ENCODE measurements at regions of chr10 and their contacts with region 1.

Region 1: GRCh38 chr10:70267161-70267933 is 16.5 kb downstream of the NPFFR1 start:
- DNase-seq: no peak
- ATAC-seq: peak in 2 of 8 donors; percentile 15 to 75
- H3K4me3 ChIP-seq: no peak overlapping the region
- H3K27ac ChIP-seq: no peak overlapping the region
- H3K4me1 ChIP-seq: peaks cover 0 to 17% (median 0%) of the 10 kb centered on the region in 9 donors
- H3K27me3 ChIP-seq: peaks cover 0 to 14% (median 0%) of the 10 kb centered on the region in 7 donors
- CTCF ChIP-seq: peak in 5 of 9 donors; percentile 18 to 35 (median 22)

Region 2: DNA sequence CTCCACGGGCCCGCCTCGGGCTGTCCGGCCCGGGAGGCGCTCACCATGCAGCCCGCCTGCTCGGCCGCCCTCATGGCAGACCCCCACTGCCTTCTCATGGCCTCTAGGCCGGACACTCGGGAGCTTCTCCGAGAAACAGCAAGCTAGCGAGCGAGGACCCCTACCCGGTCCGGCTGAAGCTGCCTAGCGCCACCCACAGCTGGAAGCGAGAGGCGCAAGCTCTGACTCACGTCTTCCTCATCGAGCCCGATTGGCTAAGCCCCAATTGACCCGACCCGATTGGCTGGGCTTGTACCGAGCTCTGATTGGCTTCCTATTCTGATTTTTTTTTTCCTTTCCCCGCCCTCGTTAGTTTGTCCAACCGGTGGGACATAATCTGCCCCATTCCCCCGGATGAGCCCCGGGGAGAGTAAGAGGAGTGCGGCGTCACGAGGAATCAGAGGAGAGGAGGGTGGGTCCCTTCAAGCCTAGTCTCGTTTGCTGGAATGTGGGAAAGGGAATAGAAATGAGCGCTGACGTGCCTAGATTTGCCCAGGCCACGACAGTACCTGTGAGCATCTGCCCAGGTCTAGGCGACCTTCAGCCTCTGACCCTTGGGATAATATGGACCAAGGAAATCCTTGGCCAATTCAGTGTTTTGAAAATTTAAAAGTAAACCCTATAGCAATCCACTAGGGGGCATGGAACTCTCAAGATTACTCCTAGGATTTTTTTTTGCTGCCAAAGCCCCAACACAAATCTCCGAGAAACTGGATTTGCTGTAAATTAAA is 120.7 kb before region 1 on chr10 and contains the start of gene TYSND1:
- intact Hi-C with region 1: no loop called
- DNase-seq: peak; percentile 94 to 98
- ATAC-seq: peak; percentile 87 to 98 (median 96)
- H3K4me3 ChIP-seq: peak within 1 kb of the TSS; percentile 74 to 90 (median 81)
- H3K27ac ChIP-seq: peak within 1 kb of the TSS; percentile 83 to 97 (median 92)
- H3K4me1 ChIP-seq: peaks cover 8 to 28% (median 20%) of the 10 kb centered on the region in 9 donors
- H3K27me3 ChIP-seq: no peaks in the 10 kb centered on the region
- CTCF ChIP-seq: peak; percentile 49 to 88 (median 70)
- total RNA-seq, gene TYSND1: 3.5 to 6.5 (median 4.6) TPM

Region 3: DNA sequence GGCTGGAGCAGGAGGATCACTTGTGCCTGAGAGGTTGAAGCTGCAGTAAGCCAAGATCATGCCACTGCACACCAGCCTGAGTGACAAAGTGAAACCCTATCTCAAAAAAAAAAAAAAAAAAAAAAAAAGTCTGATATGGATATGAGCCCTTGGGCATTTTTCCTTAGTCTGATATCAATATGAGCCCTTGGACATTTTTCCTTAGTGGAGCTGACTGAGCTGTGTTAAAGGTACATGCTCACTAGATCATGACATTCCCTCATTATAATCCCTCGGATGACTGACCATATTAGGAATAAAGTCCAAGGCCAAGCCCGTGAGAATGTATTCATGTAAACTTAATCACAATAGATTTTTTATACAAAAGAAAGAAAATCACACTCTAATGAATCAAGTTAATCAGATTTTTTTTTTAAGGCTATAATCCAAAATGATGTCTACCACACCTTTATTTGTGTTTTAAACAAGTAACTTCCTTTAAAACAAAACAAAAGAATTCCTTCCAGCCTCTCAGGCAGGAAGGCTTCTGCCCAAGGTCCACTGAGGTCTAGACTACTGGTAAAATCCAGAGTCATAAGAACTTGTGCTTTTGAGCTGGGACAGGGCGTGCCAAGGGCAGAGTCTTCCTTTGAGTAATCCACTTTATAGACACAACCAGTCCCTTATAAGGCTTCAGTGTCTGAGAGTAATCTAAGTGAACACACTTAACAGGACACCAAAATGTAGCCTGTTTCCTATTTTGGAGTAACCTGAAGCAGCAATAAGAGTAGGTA is 39.6 kb before region 1 on chr10:
- intact Hi-C with region 1: loop called in 3 of 10 experiments (anchors 5 to 10 kb)
- DNase-seq: no peak
- ATAC-seq: peak in 4 of 8 donors; percentile 29 to 56 (median 42)
- H3K4me3 ChIP-seq: no peak overlapping the region
- H3K27ac ChIP-seq: peak overlapping the region in 4 of 10 donors; percentile 10 to 37 (median 20)
- H3K4me1 ChIP-seq: peaks cover 0 to 53% (median 32%) of the 10 kb centered on the region in 9 donors
- H3K27me3 ChIP-seq: no peaks in the 10 kb centered on the region
- CTCF ChIP-seq: no peak

Region 4: DNA sequence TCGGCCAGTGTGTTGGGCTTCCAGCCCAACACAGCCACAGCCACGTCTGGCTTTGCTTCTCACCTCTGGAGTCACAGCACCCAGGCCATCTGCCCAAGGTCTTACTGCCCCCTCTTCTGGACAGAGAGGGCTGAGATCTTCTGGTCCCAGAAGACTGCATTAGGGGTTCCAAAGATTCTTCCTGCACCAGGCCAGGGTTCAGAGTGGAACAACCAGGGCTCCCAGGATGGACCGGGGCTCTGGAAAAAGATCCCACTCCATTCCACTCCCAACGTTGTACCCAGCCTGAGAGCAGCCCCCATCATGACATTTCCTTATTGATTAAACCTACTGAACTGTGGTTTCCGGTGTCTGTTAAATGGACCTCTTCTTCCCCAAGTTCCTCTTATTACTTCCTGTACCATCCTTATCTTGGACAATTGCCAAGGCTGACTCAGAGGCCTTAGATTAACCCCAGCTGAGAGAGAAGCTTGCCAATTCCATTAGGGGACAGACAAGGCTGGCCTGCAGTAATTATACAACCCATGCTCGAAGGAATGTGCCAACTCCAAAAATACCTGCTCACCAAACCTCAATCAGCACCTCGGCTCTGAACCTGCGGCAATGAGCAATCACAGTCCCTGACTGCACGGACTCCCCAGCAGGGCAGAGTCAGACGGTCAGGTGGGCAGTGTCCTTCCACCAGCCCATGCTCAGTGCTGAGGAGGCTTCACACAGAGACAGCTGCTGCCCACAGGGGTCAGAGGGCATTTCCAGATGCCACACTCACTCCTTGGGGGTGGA is 64.3 kb after region 1 on chr10:
- intact Hi-C with region 1: loop called in 1 of 10 experiments (anchors 2 kb)
- DNase-seq: peak; percentile 43 to 84
- ATAC-seq: peak; percentile 81 to 92 (median 88)
- H3K4me3 ChIP-seq: no peak overlapping the region
- H3K27ac ChIP-seq: peak overlapping the region in 9 of 10 donors; percentile 53 to 81 (median 76)
- H3K4me1 ChIP-seq: peaks cover 7 to 59% (median 44%) of the 10 kb centered on the region in 9 donors
- H3K27me3 ChIP-seq: peaks cover 0 to 70% (median 0%) of the 10 kb centered on the region in 7 donors
- CTCF ChIP-seq: peak in 8 of 9 donors; percentile 16 to 58 (median 41)

Region 5: GRCh38 chr10:70440296-70441160 is 173.2 kb after region 1 on chr10:
- intact Hi-C with region 1: no loop called
- DNase-seq: no peak
- ATAC-seq: peak in 6 of 8 donors; percentile 3 to 25 (median 11)
- H3K4me3 ChIP-seq: peak overlapping the region; percentile 2 to 53 (median 40)
- H3K27ac ChIP-seq: no peak overlapping the region
- H3K4me1 ChIP-seq: peaks cover 6 to 25% (median 17%) of the 10 kb centered on the region in 9 donors
- H3K27me3 ChIP-seq: peaks cover 4 to 49% (median 28%) of the 10 kb centered on the region in 7 donors
- CTCF ChIP-seq: no peak

Measured in heart right ventricle (tissue), 16 donors.